ENCODE measurements at regions of chr16 and their contacts with region 1.

Region 1: DNA sequence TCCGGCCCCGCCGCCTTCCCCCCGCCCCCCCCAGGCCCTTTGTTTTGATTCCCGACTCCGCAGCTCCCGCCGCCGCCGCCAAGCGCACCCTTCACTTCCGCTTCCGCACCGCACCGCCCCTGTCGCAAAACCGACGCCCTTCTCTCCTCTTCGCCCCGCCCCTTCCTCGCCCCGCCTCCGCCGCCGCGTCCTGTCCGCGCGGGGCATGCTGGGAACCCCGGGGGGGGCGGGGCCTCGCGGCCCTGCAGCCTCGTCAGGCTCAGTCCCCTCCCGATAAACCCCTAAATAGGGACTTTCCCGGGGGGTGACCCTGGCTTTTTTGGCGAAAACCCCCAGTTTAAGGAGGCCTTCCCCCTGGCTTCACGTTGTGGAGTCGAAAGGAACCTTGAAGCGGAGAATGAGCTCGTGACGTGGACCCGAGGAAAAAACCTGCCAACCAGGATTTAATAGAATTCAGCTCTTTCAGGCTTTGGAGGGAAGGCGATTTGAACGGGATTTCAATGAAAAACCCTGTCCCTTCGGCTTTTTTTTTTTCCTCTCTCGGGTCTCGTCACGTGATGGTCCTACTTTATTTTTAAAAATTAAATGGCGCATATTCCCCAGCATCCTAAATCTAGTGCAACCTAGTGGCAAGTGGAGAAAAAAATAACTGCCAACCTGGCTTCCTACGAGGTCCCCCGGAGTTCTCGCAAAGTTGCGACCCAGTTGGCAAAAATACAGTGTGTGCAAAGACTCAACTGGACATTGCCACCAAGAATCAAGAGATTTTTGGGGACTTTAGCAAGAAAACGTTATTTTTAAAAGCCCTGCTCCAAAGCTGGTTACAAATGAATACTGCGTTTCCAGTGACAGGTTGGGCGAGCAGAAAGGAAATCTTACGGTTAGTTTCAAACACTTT is at the start of gene MARF1:
- DNase-seq: peak; percentile 99
- total RNA-seq, gene MARF1: 39.7 TPM

Region 2: GRCh38 chr16:15493466-15494150 is 149.7 kb before region 1 on chr16:
- intact Hi-C with region 1: no loop called
- DNase-seq: no peak

Region 3: DNA sequence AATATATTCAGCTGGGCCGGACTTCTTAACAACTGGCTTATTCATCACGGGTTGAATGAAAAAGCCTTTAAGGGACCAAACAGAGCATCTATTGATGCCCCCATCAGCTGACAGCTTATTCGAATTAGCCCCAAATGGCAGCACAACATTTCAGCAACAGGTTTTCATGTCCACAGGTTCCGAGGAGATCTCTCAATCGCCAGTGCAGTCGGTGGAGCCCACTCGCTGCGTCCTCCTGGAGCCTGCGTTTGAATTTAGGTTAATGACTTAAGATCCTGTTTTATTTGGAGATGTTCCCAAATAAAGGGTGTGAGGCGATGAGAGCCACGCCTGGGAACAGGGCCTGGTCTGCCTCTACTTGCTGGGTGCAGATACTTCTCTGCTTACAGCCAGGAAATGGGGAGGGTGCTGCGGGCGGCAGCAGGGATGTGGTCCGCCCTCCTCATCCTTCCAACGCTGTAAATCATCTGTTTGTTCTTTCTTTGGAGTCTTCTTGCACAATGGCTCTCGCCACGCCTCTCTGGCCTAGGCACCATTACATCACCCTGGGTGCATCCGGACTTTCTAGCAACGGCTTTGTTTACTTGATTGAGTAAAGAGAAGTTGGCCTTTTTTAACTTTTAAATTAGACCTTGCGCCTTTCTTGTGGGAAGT is 29.3 kb after region 1 on chr16:
- intact Hi-C with region 1: loop called (anchors 2 kb)
- DNase-seq: peak; percentile 96

Measured in cardiac septum (tissue), 1 donor.